ENCODE measurements at regions of chr17 and their contacts with region 1.

Region 1: DNA sequence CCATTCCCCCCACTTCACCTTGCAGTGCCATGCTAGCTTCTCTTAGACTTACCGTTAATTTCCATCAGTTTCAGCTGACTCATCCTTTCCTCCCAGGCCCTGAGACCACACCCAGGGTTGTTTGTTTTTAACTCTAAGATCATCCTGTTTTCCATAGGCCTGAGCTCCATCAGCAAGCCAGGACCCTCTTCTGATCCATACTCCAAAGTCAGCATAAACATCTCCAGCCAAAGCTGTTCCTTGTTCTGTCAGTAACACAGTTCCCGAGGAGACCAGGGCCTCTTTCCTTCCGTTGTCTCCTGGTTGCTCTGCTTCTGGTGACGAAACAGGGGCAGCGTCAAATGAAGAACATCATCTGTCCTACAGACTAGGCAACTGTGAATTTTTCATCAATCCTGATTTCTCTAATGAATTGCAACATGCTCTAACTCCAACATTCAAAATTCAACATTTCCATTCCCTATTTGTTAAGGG is 83.8 kb upstream of the HNF1B start:
- DNase-seq: peak; percentile 65
- H3K4me3 Mint-ChIP-seq: peak overlapping the region; percentile 15
- H3K27ac Mint-ChIP-seq: peak overlapping the region; percentile 83
- H3K4me1 Mint-ChIP-seq: peaks cover 34% of the 10 kb centered on the region
- H3K27me3 Mint-ChIP-seq: no peaks in the 10 kb centered on the region

Region 2: DNA sequence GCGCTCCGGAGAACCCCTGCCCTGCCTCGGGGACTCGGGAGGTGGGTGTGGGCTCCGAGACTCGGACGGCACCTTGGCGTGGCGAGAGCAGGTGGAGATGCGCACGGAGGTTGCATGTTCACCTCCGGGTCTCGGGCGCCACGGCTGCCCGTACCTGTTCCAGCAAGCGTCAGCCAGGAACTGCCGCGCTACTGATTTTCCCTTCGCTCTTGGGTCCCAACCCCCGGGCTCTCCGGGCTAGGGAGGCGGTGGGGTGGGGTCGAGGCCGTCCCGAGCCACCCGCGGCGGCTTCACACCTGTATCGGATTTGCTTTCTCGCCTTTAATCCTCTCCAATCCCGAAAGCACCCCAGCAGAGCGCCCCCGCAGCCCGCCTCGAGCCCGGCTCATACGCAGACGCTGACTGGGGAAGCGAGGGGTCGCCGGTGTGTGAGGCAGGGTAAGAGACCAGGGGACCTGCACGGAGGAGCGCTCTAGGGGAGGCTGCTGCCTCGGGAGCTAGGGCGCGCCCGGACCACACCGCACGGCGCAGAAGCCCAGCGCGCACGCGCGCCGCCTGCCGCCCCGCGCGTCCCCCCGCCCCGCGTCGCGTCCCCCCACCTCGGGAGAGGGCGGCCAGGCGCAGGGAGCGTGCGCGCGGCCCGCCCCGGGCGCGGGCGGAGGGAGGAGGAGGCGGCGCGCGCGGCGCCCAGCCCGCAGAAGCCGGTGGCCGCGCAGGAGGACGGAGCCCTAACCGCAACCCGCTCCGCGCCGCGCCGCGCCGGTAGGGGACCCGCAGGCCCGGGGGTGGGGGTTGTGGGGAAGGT is 339.3 kb before region 1 on chr17 and contains the start of gene DUSP14:
- intact Hi-C with region 1: no loop called
- DNase-seq: peak; percentile 95
- H3K4me3 Mint-ChIP-seq: peak within 1 kb of the TSS; percentile 92
- H3K27ac Mint-ChIP-seq: peak within 1 kb of the TSS; percentile 97
- H3K4me1 Mint-ChIP-seq: peaks cover 39% of the 10 kb centered on the region
- H3K27me3 Mint-ChIP-seq: no peaks in the 10 kb centered on the region
- total RNA-seq, gene DUSP14: 18.7 and 20.2 TPM in 2 replicates

Region 3: GRCh38 chr17:37691807-37692400 is 136.8 kb before region 1 on chr17:
- intact Hi-C with region 1: no loop called
- DNase-seq: no peak
- H3K4me3 Mint-ChIP-seq: no peak overlapping the region
- H3K27ac Mint-ChIP-seq: no peak overlapping the region
- H3K4me1 Mint-ChIP-seq: no peaks in the 10 kb centered on the region
- H3K27me3 Mint-ChIP-seq: peaks cover 5% of the 10 kb centered on the region

Region 4: GRCh38 chr17:37770631-37771518 is 57.8 kb before region 1 on chr17:
- intact Hi-C with region 1: loop called (anchors 5 kb)
- DNase-seq: peak; percentile 81
- H3K4me3 Mint-ChIP-seq: no peak overlapping the region
- H3K27ac Mint-ChIP-seq: peak overlapping the region; percentile 21
- H3K4me1 Mint-ChIP-seq: peaks cover 51% of the 10 kb centered on the region
- H3K27me3 Mint-ChIP-seq: peaks cover 18% of the 10 kb centered on the region

Region 5: GRCh38 chr17:37813751-37814150 is 14.9 kb before region 1 on chr17:
- intact Hi-C with region 1: no loop called
- DNase-seq: no peak
- H3K4me3 Mint-ChIP-seq: no peak overlapping the region
- H3K27ac Mint-ChIP-seq: no peak overlapping the region
- H3K4me1 Mint-ChIP-seq: peaks cover 6% of the 10 kb centered on the region
- H3K27me3 Mint-ChIP-seq: peaks cover 51% of the 10 kb centered on the region

Region 6: GRCh38 chr17:37844158-37844976 is 15.7 kb after region 1 on chr17:
- intact Hi-C with region 1: loop called (anchors 2 kb)
- DNase-seq: peak; percentile 88
- H3K4me3 Mint-ChIP-seq: peak overlapping the region; percentile 51
- H3K27ac Mint-ChIP-seq: peak overlapping the region; percentile 58
- H3K4me1 Mint-ChIP-seq: peaks cover 27% of the 10 kb centered on the region
- H3K27me3 Mint-ChIP-seq: peaks cover 8% of the 10 kb centered on the region

Measured in activated CD4-positive, alpha-beta T cell treated with anti-CD3 and anti-CD28 coated beads, Interleukin-2, amount 10 ng/mL, durations not matched to agents 24 days and 14 days (primary cell).